Right ventricle myocardium inferior (tissue), 1 donor: ENCODE measurements at regions of chr20 and their contacts with region 1.

Region 1: GRCh38 chr20:47501483-47502270 is at the start of gene NCOA3:
- DNase-seq: peak; percentile 99
- ATAC-seq: peak; percentile 99
- total RNA-seq, gene NCOA3: 21.6 TPM

Region 2: GRCh38 chr20:47392015-47392720 is 109.5 kb before region 1 on chr20:
- intact Hi-C with region 1: loop called (anchors 5 kb)
- DNase-seq: no peak
- ATAC-seq: peak; percentile 61

Region 3: GRCh38 chr20:47411161-47411560 is 90.5 kb before region 1 on chr20:
- intact Hi-C with region 1: loop called (anchors 5 kb)
- DNase-seq: no peak
- ATAC-seq: peak; percentile 71

Region 4: GRCh38 chr20:47438577-47439381 is 62.9 kb before region 1 on chr20:
- intact Hi-C with region 1: no loop called
- DNase-seq: no peak
- ATAC-seq: peak; percentile 54

Region 5: GRCh38 chr20:47561180-47561579 is 59.5 kb after region 1 on chr20:
- intact Hi-C with region 1: loop called (anchors 5 kb)
- DNase-seq: no peak
- ATAC-seq: peak; percentile 34

Region 6: GRCh38 chr20:47576516-47577033 is 74.9 kb after region 1 on chr20:
- intact Hi-C with region 1: loop called (anchors 5 kb)
- DNase-seq: no peak
- ATAC-seq: peak; percentile 91

Region 7: DNA sequence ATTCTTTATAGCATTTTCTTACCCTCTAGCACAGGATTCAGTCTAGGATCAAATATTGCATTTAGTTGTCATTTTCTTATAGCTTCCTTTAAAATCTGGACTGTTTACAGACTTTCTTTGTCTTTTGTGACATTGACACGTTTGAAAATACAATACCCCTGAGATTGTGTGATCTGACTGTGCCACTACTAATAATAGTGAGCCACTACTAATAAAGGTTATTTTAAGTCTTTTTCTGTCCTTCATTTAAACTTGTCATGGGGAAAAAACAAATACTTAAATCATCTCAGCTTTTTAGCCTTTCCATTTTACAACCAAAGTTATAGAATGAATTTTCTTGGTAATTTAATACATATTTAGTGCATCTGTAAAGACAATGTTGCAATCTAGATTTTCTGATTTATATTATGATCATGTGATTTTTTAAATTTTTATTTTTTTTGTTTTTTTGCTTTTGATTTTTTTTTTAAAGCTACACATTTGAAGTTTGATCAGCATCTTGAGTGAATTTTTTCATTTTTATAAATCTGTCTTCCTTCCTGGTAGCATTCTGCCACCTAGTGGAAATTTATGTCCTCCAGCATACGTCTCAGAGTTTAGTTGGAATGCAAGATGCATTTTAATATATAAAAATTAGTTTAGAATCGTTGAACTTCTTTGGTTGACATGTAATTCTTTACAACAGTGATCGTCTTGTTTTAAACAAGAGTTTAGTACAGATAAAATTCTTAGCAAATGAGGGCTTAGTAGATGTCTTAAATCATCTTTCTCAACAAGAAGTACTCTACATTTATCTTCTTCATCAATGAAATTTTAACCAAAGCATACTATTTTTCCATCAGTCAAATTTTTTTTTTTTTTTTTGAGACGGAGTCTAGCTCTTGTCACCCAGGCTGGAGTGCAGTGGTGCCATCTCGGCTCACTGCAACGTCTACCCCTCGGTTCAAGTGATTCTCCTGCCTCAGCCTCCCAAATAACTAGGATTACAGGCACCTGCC is 119.4 kb after region 1 on chr20:
- intact Hi-C with region 1: loop called (anchors 5 kb)
- DNase-seq: no peak
- ATAC-seq: no peak

Region 8: DNA sequence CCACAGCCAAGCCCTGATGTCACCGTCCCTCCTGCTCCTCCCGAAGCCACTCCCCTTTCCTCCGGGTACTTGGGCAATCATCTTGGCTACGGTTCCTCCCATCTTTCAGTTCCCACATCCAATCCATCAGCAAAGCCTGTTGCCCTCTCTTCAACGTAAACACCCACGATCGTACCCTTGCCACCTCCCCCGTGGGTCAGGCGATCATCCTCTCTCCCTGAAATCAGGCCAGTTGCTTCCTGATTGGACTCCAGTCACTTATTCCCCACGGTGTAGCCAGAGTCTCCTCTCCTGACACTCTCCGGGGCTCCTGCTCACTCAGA is 239.1 kb after region 1 on chr20:
- intact Hi-C with region 1: no loop called
- DNase-seq: peak; percentile 88
- ATAC-seq: peak; percentile 36